SK-N-SH (cell line): ENCODE measurements at regions of chr5 and their contacts with region 1.

Region 1: GRCh38 chr5:77143998-77144836 is 57.1 kb upstream of the ZBED3 start:
- DNase-seq: peak; percentile 64
- H3K4me3 ChIP-seq: no peak overlapping the region; a peak in 1 of 4 replicates
- H3K27ac ChIP-seq: no peak overlapping the region
- H3K4me1 ChIP-seq: no peaks in the 10 kb centered on the region
- H3K27me3 ChIP-seq: peaks cover 7% of the 10 kb centered on the region
- CTCF ChIP-seq: peak; percentile 85
- EP300 ChIP-seq: no peak
- RAD21 ChIP-seq: peak; percentile 95

Region 2: DNA sequence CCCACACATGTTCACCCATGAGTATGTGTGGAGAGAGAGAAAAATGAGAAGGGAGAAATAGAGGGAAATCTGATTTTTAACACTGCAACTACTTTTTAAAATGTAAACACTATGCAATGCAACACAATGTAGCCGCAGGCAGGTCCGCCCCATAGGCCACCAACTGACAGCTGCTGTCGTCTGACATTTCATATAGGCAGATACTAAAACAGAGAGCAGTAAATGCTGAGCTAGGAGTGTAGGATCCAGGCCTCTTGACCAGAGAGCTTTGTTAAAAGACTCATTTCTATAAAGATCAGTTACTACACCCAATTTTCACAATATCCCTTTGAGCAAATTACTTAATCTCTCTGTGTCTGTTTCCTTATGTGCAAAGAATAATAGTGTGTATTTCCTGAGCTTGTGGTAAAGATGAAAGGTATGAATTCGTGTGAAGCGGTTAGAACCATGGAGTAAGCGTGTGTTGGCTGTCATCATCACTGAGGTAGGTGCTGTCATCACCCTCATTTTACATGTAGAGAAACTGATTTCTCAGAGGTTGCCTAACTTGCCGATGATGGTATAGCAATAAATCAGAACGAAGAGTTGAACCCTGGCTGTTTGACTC is 11.1 kb after region 1 on chr5:
- CTCF ChIA-PET with region 1: interaction called, 11 read pairs
- POLR2A ChIA-PET with region 1: no interaction called
- DNase-seq: no peak
- H3K4me3 ChIP-seq: no peak overlapping the region
- H3K27ac ChIP-seq: no peak overlapping the region
- H3K4me1 ChIP-seq: no peaks in the 10 kb centered on the region
- H3K27me3 ChIP-seq: peaks cover 24% of the 10 kb centered on the region; the same call in 1 of the 2 replicates
- CTCF ChIP-seq: no peak
- EP300 ChIP-seq: no peak
- RAD21 ChIP-seq: no peak

Region 3: GRCh38 chr5:77282337-77283027 is 138.3 kb after region 1 on chr5:
- CTCF ChIA-PET with region 1: no interaction called
- POLR2A ChIA-PET with region 1: no interaction called
- DNase-seq: peak; percentile 29
- H3K4me3 ChIP-seq: no peak overlapping the region
- H3K27ac ChIP-seq: no peak overlapping the region
- H3K4me1 ChIP-seq: peaks cover 0 to 9% of the 10 kb centered on the region in 2 experiments; a peak in 1 of 4 replicates
- H3K27me3 ChIP-seq: no peaks in the 10 kb centered on the region
- CTCF ChIP-seq: no peak
- EP300 ChIP-seq: no peak
- RAD21 ChIP-seq: no peak